PC-9 (cell line): ENCODE measurements at regions of chr3 and their contacts with region 1.

Region 1: DNA sequence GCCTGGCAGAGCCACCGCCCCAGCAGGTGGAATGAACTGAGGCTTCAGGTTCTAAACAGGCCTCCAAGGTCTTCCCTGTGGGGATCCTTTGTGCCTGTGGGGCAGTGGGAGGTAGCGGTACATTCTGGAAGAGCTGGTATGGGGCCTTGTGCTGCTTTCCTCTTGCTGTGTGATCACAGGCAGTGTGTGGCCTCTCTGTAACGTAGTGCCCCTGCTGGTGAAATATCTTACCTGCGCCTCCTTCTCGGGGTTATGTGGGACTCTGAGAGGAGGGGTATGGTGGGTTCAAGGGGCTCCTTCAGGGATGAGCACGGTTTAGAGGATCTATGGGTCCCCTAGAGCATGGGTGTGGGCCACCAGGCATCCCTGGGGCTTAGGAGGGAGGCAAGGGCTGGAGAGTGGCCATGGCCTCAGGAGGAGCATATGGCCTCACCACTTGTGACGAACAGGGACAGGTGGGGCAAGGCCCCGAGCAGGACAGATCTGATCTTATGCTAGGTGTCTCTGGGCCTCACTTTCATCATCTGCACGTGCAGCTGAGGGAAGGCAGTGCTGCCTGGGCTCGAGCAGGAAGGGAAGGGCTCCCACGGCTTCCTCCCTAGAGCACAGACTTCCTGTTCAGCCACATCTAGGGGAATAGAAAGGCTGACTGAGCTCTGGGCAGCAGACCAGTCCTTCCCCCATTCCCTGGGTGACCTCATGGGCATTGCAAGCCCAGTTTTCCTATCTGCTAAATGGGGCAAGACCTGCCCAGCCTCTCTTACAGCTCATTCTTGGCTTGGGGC is 1.9 kb upstream of the ALS2CL start:
- DNase-seq: no peak
- H3K4me3 ChIP-seq: no peak overlapping the region
- H3K27ac ChIP-seq: no peak overlapping the region
- H3K4me1 ChIP-seq: peaks cover 31% of the 10 kb centered on the region
- H3K27me3 ChIP-seq: no peaks in the 10 kb centered on the region
- CTCF ChIP-seq: peak; percentile 56

Region 2: GRCh38 chr3:45105855-45106671 is 1589.3 kb before region 1 on chr3:
- CTCF ChIA-PET with region 1: no interaction called
- POLR2A ChIA-PET with region 1: no interaction called
- intact Hi-C with region 1: no loop called
- DNase-seq: no peak
- H3K4me3 ChIP-seq: no peak overlapping the region
- H3K27ac ChIP-seq: no peak overlapping the region; the same call in 1 of the 2 replicates
- H3K4me1 ChIP-seq: no peaks in the 10 kb centered on the region
- H3K27me3 ChIP-seq: no peaks in the 10 kb centered on the region
- CTCF ChIP-seq: no peak

Region 3: DNA sequence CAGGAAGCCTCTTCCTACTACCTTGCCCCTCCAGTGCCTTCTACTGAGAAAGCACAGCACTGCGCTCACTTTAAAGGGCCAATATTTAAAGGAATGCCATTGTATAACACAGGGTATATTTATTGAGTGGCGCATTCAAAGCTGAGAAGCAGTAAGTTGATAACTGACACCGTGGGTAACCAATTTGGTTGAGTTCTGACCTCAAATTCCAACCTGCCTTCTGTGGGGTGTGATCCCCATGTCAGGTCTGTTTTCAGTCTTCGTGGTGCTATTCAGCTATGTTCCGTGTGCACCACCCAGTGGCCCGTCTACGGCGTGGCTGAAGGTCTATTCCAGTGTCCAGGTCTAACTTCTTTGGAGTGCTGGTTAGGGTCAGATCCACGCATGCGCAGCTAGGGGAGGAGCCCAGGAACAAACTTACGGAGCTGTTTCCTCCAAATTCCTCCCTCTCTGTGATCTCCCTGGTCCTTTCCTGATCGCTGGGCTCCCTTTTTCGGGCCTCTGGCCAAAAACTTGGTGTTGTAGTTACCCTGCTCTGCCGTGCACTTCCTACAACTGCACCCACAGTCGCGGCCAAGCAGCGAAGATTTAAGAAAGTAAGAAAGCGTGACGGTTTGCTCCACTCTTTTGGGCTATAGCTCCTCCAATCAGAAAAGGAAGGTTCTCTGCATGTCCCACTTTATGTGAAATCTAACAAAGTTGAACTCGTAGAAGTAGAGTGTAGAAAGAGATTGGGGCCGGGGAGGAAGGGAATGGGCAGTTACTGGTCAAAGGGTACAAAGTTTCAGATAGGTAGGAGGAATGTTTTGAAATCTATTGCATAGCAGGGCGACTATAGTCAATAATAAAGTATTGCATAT is 137.0 kb before region 1 on chr3:
- CTCF ChIA-PET with region 1: no interaction called
- POLR2A ChIA-PET with region 1: no interaction called
- intact Hi-C with region 1: loop called (anchors 2 kb)
- DNase-seq: peak; percentile 84 to 89
- H3K4me3 ChIP-seq: peak overlapping the region; percentile 53; the same call in 1 of the 2 replicates
- H3K27ac ChIP-seq: 0 out of 2 replicates have a peak overlapping the region, but pooled peaks have one; percentile 22
- H3K4me1 ChIP-seq: 0 out of 2 replicates have a peak, but pooled peaks cover 4% of the 10 kb centered on the region
- H3K27me3 ChIP-seq: no peaks in the 10 kb centered on the region
- CTCF ChIP-seq: peak; percentile 64

Region 4: GRCh38 chr3:46824211-46824970 is 129.0 kb after region 1 on chr3:
- CTCF ChIA-PET with region 1: interaction called, 15 read pairs
- POLR2A ChIA-PET with region 1: no interaction called
- intact Hi-C with region 1: no loop called
- DNase-seq: no peak
- H3K4me3 ChIP-seq: no peak overlapping the region
- H3K27ac ChIP-seq: no peak overlapping the region
- H3K4me1 ChIP-seq: no peaks in the 10 kb centered on the region
- H3K27me3 ChIP-seq: no peaks in the 10 kb centered on the region
- CTCF ChIP-seq: no peak

Region 5: GRCh38 chr3:47513125-47513929 is 818.0 kb after region 1 on chr3 and contains the start of gene ELP6:
- CTCF ChIA-PET with region 1: interaction called, 4 read pairs
- POLR2A ChIA-PET with region 1: no interaction called
- intact Hi-C with region 1: loop called (anchors 10 kb)
- DNase-seq: peak; percentile 83 to 96
- H3K4me3 ChIP-seq: peak within 1 kb of the TSS; percentile 68
- H3K27ac ChIP-seq: peak within 1 kb of the TSS; percentile 55
- H3K4me1 ChIP-seq: peaks cover 5% of the 10 kb centered on the region; the same call in 1 of the 2 replicates
- H3K27me3 ChIP-seq: no peaks in the 10 kb centered on the region
- CTCF ChIP-seq: peak; percentile 55
- total RNA-seq, gene ELP6: 38.8 and 39.6 TPM in 2 replicates